Activated CD4-positive, alpha-beta memory T cell treated with anti-CD3 and anti-CD28 coated beads for 36 hours (primary cell): ENCODE measurements at regions of chr11 and their contacts with region 1.

Region 1: GRCh38 chr11:59135648-59136461 is 6.8 kb upstream of the FAM111A start:
- DNase-seq: peak; percentile 91
- H3K4me3 Mint-ChIP-seq: peak overlapping the region; percentile 57
- H3K27ac Mint-ChIP-seq: no peak overlapping the region
- H3K4me1 Mint-ChIP-seq: peaks cover 7% of the 10 kb centered on the region
- H3K27me3 Mint-ChIP-seq: no peaks in the 10 kb centered on the region

Region 2: DNA sequence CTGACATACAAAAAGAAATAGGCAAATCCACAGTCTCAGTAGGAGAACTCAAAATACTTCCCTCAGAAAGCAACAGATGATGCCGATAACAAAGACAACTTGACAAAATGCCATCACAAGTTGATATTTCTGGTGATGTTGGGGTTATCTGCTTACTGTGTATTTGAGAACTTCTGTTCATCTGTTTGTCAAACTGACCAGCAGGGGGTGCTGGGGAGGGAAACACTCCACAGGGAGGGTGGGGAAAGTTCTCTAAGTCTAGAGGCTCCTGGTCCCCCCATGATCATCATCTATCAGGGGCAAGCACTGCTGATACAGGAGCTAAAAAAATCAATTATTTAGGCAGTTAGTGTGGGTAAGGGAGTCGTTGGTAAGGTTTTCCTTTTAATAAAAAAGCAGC is 177.4 kb before region 1 on chr11:
- CTCF ChIA-PET with region 1: no interaction called
- POLR2A ChIA-PET with region 1: no interaction called
- intact Hi-C with region 1: loop called (anchors 2 kb)
- DNase-seq: peak; percentile 53
- H3K4me3 Mint-ChIP-seq: no peak overlapping the region
- H3K27ac Mint-ChIP-seq: no peak overlapping the region
- H3K4me1 Mint-ChIP-seq: peaks cover 3% of the 10 kb centered on the region
- H3K27me3 Mint-ChIP-seq: peaks cover 6% of the 10 kb centered on the region

Region 3: DNA sequence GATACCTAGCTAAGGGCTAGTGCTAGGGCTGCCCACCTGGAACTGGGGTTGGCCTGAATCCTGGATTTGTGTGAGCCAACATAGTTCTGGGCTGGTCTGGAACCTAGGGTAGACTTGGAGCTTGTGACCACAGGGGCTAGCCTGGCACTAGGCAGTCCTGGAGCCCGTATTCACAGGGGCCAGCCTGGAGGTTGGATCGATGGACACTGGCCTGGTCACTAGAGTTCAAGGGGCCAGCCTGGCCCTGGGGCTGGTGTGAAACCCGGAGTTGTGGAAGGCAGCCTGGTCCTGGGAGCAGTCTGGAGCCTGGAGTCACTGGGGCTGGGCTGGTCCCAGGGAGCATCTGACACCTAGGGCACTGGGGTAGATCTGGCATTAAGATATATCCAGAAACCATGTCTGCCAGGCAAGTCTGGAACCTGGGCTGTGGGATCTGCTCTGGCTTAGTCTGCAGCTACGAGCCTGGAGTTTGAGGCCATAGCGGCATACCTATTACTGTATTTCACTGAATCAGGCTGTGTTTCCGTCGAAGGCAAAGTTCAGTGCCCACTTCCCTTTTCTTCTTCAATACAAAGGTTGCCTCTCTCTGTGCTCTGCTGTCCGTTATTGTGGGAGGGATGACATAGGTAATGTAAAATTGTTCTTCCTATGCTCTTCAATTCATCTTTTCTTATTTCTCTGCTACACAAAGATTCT is 58.8 kb before region 1 on chr11:
- CTCF ChIA-PET with region 1: interaction called, 10 read pairs
- POLR2A ChIA-PET with region 1: no interaction called
- intact Hi-C with region 1: no loop called
- DNase-seq: no peak
- H3K4me3 Mint-ChIP-seq: no peak overlapping the region
- H3K27ac Mint-ChIP-seq: no peak overlapping the region
- H3K4me1 Mint-ChIP-seq: no peaks in the 10 kb centered on the region
- H3K27me3 Mint-ChIP-seq: peaks cover 25% of the 10 kb centered on the region

Region 4: GRCh38 chr11:59106363-59107336 is 29.2 kb before region 1 on chr11 and contains the start of gene FAM111B:
- CTCF ChIA-PET with region 1: interaction called, 73 read pairs
- POLR2A ChIA-PET with region 1: interaction called, 10 read pairs
- intact Hi-C with region 1: loop called (anchors 1 kb)
- DNase-seq: peak; percentile 86
- H3K4me3 Mint-ChIP-seq: peak within 1 kb of the TSS; percentile 84
- H3K27ac Mint-ChIP-seq: peak within 1 kb of the TSS; percentile 72
- H3K4me1 Mint-ChIP-seq: peaks cover 42% of the 10 kb centered on the region
- H3K27me3 Mint-ChIP-seq: peaks cover 3% of the 10 kb centered on the region
- total RNA-seq, gene FAM111B: 28.9 to 31.0 TPM

Region 5: GRCh38 chr11:59152312-59152951 is 16.6 kb after region 1 on chr11:
- CTCF ChIA-PET with region 1: interaction called, 148 read pairs
- POLR2A ChIA-PET with region 1: no interaction called
- intact Hi-C with region 1: no loop called
- DNase-seq: peak; percentile 55
- H3K4me3 Mint-ChIP-seq: peak overlapping the region; percentile 53
- H3K27ac Mint-ChIP-seq: peak overlapping the region; percentile 92
- H3K4me1 Mint-ChIP-seq: peaks cover 41% of the 10 kb centered on the region
- H3K27me3 Mint-ChIP-seq: no peaks in the 10 kb centered on the region